ENCODE measurements at regions of chrX and their contacts with region 1.

Region 1: DNA sequence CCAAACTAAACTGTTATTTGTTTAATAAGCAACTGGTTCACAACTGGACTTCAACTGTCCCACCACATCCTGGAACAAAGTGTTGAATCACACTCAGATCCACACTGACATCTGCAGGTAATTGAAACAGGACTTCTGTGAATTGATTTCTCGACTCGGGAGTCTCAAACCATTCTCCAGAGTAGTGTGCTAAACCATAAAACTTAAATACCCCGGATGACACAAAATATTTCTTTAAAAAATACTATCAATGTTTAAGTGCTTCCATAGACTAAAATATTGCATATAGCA is 95.4 kb upstream of the PLAC1 start:
- DNase-seq: no peak
- H3K4me3 Mint-ChIP-seq: no peak overlapping the region
- H3K27ac Mint-ChIP-seq: no peak overlapping the region
- H3K4me1 Mint-ChIP-seq: no peaks in the 10 kb centered on the region
- H3K27me3 Mint-ChIP-seq: no peaks in the 10 kb centered on the region
- CTCF ChIP-seq: no peak

Region 2: GRCh38 chrX:134369576-134369975 is 384.1 kb before region 1 on chrX:
- CTCF ChIA-PET with region 1: no interaction called
- intact Hi-C with region 1: no loop called
- DNase-seq: no peak
- H3K4me3 Mint-ChIP-seq: no peak overlapping the region
- H3K27ac Mint-ChIP-seq: no peak overlapping the region
- H3K4me1 Mint-ChIP-seq: no peaks in the 10 kb centered on the region
- H3K27me3 Mint-ChIP-seq: no peaks in the 10 kb centered on the region
- CTCF ChIP-seq: no peak

Region 3: GRCh38 chrX:134484039-134484438 is 269.6 kb before region 1 on chrX:
- CTCF ChIA-PET with region 1: no interaction called
- intact Hi-C with region 1: loop called (anchors 1 kb)
- DNase-seq: no peak
- H3K4me3 Mint-ChIP-seq: no peak overlapping the region
- H3K27ac Mint-ChIP-seq: no peak overlapping the region
- H3K4me1 Mint-ChIP-seq: no peaks in the 10 kb centered on the region
- H3K27me3 Mint-ChIP-seq: no peaks in the 10 kb centered on the region
- CTCF ChIP-seq: peak; percentile 51

Region 4: DNA sequence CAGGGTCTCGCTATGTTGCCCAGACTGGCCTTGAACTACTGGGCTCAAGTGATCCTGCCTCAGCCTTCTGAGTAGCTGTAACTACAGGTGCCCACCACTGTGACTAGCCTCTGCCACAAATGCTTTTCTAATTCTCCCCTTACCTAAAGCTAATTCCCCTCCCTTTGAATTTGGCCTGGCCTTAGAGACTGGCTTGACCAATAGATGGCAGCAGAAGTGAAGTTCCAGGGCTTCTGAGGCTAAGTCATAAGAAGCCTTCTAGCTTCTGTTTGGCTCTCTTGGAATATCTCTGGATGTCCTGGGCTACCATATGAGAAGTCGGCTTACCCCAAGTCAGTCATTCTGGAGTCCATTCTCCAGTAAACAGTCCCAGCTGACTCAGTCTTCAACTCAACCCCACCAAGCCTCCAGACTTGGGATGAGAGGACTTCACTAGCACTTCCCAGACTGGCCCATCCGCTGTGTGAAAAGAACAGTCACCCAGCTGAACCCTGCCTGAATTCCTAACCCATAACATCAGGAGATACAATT is 232.7 kb before region 1 on chrX:
- CTCF ChIA-PET with region 1: interaction called, 12 read pairs
- intact Hi-C with region 1: loop called (anchors 1 kb)
- DNase-seq: peak; percentile 49
- H3K4me3 Mint-ChIP-seq: no peak overlapping the region
- H3K27ac Mint-ChIP-seq: no peak overlapping the region
- H3K4me1 Mint-ChIP-seq: no peaks in the 10 kb centered on the region
- H3K27me3 Mint-ChIP-seq: no peaks in the 10 kb centered on the region
- CTCF ChIP-seq: no peak

Region 5: DNA sequence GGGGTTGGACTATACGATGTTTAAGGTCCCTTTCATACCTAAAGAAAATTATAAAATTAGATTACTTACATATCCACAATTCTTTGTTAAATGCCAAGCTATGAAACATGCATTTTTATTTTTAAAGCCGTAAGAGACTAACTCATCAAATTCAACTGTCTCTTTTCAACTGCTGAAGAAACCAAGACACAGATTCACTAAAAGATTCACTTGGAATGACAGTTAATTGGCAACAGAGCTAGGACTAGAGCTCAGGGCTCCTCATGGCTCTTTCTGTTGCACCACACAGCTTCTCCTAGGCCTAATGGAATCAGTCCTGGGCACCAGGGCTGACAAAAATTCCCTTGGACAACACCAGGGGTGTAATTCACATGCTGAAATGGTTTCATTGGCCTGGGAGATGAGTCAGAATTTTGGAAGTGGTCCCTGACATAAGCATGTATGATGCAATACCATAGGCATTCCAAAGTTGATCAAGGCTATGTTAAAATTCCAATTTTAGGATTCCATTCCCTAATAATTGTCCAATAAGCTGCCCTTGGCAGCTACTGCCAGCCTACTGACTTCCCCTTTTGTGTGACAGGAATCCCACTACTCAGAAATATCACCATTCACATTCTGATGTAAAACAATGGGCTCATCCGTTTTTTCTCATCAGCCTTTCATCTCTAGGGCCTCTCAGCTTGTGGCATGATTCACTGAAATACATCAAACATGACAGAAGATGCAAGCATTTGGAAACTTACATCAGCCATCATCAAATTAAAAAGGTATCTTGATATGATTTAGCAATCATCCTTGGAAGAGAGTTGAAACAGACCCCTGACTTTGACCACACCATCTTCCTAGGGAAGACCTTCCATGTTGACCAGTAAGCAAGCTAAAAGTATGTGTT is 149.6 kb before region 1 on chrX:
- CTCF ChIA-PET with region 1: no interaction called
- intact Hi-C with region 1: loop called (anchors 5 kb)
- DNase-seq: no peak
- H3K4me3 Mint-ChIP-seq: no peak overlapping the region
- H3K27ac Mint-ChIP-seq: peak overlapping the region; percentile 40
- H3K4me1 Mint-ChIP-seq: peaks cover 16% of the 10 kb centered on the region
- H3K27me3 Mint-ChIP-seq: peaks cover under 1% of the 10 kb centered on the region
- CTCF ChIP-seq: no peak

Region 6: DNA sequence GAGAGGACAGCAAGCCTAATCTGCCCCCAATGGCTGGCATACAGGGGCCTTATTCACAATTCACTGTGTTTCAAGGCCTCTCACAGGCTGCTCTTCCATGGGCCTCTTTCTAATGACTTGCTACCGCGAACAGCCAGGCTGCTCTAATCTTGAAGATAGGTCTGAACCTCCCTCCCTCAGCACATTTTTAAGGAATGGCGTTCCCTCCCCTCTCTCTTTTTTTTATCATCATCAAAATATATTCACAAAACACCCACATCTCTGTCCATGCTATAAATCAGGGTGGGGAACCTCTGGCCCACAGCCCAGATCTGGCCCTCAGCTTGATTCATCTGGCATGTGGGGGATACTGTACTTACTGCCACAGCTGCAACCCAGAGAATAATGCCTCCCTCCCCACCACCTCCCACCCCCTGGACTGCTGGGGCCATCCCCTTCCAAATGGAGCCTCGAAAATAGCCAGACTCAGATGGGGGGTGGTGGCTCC is 19.2 kb before region 1 on chrX:
- CTCF ChIA-PET with region 1: no interaction called
- intact Hi-C with region 1: no loop called
- DNase-seq: no peak
- H3K4me3 Mint-ChIP-seq: no peak overlapping the region
- H3K27ac Mint-ChIP-seq: no peak overlapping the region
- H3K4me1 Mint-ChIP-seq: no peaks in the 10 kb centered on the region
- H3K27me3 Mint-ChIP-seq: peaks cover 33% of the 10 kb centered on the region
- CTCF ChIP-seq: no peak

Measured in Calu3 (cell line).